ENCODE measurements at regions of chr10 and their contacts with region 1.

Region 1: GRCh38 chr10:22316285-22317120 is at the start of gene COMMD3:
- DNase-seq: peak; percentile 86 to 92
- ATAC-seq: peak; percentile 83
- total RNA-seq, gene COMMD3: 38.4 to 50.0 TPM

Region 2: DNA sequence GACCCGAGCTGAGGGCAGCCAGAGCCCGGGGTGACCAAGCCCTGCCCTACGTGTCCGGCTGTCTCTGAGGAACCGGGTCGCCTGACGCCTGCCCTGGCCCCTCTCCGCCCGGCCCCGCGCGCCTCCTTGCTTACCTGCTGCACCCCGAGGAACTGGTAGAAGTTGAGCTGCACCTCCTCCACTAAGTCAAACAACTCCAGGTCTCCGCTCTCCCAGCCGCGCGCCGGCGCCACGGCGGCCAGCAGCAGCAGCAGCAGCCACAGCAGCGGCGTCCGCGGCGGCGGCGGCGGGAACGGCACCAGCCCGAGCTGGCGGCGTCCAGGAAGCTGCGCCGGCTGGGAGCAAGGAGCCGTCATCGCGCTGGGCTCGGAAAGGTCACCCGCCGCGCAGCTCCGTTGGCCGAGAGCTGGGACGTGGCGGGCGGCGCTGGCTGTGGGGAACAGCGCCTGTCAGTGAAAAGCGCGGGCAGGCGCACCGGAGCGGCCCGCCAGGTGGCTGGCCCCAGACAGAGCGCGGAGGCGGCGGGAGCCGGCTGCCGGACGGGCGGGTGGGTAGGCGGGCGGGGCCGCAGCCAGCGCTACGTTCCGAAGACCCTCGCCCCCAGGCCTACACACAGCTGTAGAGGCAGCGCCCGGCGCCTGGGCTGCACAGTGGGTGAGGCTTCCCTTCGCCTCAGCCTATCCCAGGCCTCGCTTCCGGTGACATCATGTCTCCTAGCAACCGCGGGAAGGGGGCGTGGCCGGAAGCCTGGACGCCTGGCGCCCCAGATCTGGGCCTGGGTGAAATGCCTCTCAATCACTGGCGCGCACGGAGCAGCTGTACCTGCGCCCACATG is 313.2 kb before region 1 on chr10 and contains the start of gene DNAJC1:
- intact Hi-C with region 1: loop called in 1 of 2 experiments (anchors 10 kb)
- DNase-seq: peak; percentile 98 to 100
- ATAC-seq: peak; percentile 96
- total RNA-seq, gene DNAJC1: 29.7 to 33.7 TPM

Region 3: DNA sequence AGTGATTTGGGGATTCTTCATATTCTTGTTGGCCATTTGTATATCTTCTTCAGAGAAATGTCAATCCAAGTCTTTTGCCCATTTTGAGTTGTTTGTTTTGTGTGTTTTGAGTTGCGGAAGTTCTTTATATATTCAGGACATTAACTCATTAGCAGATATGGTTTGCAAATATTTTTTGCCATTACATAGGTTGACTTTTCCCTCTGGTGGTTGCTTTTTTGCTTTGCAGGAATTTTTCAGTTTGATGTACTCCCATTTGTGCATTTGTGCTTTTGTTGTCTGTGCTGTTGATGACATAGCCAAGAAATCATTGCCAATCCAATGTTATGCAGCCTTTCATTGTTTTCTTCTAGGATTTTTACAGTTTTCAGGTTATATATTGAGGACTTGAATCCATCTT is 249.4 kb before region 1 on chr10:
- intact Hi-C with region 1: no loop called
- DNase-seq: no peak
- ATAC-seq: no peak

Region 4: GRCh38 chr10:22228943-22229801 is 87.3 kb before region 1 on chr10:
- intact Hi-C with region 1: loop called in 1 of 2 experiments (anchors 5 kb)
- DNase-seq: peak; percentile 73 to 82
- ATAC-seq: peak; percentile 98

Measured in left colon (tissue), 2 donors.